Aorta (tissue), 5 donors: ENCODE measurements at regions of chr1 and their contacts with region 1.

Region 1: GRCh38 chr1:46616277-46617107 is at the start of gene MOB3C:
- DNase-seq: peak; percentile 92 to 95
- ATAC-seq: peak; percentile 93
- H3K4me3 ChIP-seq: peak within 1 kb of the TSS; percentile 75 to 80
- H3K27ac ChIP-seq: peak within 1 kb of the TSS; percentile 23 to 90
- H3K4me1 ChIP-seq: no peaks in the 10 kb centered on the region
- H3K27me3 ChIP-seq: no peaks in the 10 kb centered on the region
- total RNA-seq, gene MOB3C: 23.2 to 31.2 TPM

Region 2: DNA sequence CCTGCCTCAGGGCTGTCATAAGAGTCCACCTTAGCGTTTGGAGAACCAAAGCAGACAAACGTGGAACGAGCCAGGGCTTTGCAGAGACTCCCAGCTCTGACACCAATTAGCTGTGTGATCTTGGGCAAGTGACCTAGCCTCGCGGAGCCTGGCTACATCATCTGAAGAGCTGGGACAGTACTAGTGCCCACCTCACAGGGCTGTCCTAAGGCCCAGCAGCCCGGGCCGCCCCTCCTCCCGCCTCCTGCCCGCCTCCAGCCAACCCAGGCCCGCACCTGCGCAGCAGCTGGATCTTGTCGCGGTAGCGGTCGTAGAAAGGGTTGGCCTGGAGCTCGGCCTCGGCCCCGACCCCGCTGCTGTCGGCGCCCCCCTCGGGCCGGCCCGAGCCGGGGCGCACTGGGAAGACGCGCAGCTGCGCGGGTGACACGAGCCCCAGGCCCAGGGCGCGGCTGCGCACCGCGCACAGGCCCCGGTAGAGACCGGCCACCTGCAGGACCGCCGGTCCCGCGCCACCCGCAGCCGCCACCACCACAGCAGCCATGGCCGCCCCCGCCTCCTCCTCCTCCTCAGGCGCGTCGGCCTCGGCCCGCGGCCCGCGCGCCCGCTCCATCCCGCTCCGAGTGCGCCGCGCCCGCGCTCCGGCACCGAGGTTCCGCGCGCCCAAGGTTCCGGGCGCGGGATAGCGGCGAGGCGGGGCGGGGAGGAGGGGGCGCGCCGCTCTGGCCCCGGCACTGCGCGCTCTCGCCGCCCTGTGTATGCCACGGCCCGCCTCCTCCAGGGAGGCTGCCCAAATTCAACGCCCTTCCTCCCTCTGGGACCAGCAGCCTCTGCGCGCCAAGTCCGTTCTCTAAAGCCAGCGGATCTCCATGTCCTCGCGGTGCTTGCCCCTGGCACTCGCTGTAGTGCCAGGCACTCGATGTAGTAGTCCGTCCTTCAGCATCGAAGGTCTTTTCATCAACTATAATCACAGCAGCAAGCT is 51.6 kb after region 1 on chr1 and contains the start of gene ATPAF1:
- intact Hi-C with region 1: loop called (anchors 5 to 10 kb)
- DNase-seq: peak; percentile 86 to 91
- ATAC-seq: peak; percentile 94
- H3K4me3 ChIP-seq: peak within 1 kb of the TSS; percentile 91
- H3K27ac ChIP-seq: peak within 1 kb of the TSS; percentile 51 to 84
- H3K4me1 ChIP-seq: peaks cover 0 to 11% of the 10 kb centered on the region in 2 donors
- H3K27me3 ChIP-seq: no peaks in the 10 kb centered on the region
- total RNA-seq, gene ATPAF1: 26.9 to 35.0 TPM

Region 3: GRCh38 chr1:46724991-46725735 is 108.7 kb after region 1 on chr1:
- intact Hi-C with region 1: loop called in 1 of 2 experiments (anchors 10 kb)
- DNase-seq: peak; percentile 73 to 80
- ATAC-seq: peak; percentile 94
- H3K4me3 ChIP-seq: no peak overlapping the region
- H3K27ac ChIP-seq: no peak overlapping the region
- H3K4me1 ChIP-seq: no peaks in the 10 kb centered on the region
- H3K27me3 ChIP-seq: no peaks in the 10 kb centered on the region